ENCODE measurements at regions of chr16 and their contacts with region 1.

Region 1: GRCh38 chr16:10918294-10919002 is 23.8 kb downstream of the DEXI start:
- DNase-seq: peak; percentile 95
- H3K4me3 ChIP-seq: no peak overlapping the region
- H3K27ac ChIP-seq: no peak overlapping the region
- H3K4me1 ChIP-seq: no peaks in the 10 kb centered on the region
- H3K27me3 ChIP-seq: no peaks in the 10 kb centered on the region
- CTCF ChIP-seq: peak; percentile 93

Region 2: GRCh38 chr16:9772526-9773225 is 1145.8 kb before region 1 on chr16:
- intact Hi-C with region 1: no loop called
- DNase-seq: no peak
- H3K4me3 ChIP-seq: no peak overlapping the region
- H3K27ac ChIP-seq: no peak overlapping the region
- H3K4me1 ChIP-seq: no peaks in the 10 kb centered on the region
- H3K27me3 ChIP-seq: no peaks in the 10 kb centered on the region
- CTCF ChIP-seq: no peak

Region 3: GRCh38 chr16:10668322-10669045 is 250.0 kb before region 1 on chr16:
- intact Hi-C with region 1: loop called (anchors 10 kb)
- DNase-seq: no peak
- H3K4me3 ChIP-seq: no peak overlapping the region
- H3K27ac ChIP-seq: no peak overlapping the region
- H3K4me1 ChIP-seq: no peaks in the 10 kb centered on the region
- H3K27me3 ChIP-seq: no peaks in the 10 kb centered on the region
- CTCF ChIP-seq: peak; percentile 32

Region 4: DNA sequence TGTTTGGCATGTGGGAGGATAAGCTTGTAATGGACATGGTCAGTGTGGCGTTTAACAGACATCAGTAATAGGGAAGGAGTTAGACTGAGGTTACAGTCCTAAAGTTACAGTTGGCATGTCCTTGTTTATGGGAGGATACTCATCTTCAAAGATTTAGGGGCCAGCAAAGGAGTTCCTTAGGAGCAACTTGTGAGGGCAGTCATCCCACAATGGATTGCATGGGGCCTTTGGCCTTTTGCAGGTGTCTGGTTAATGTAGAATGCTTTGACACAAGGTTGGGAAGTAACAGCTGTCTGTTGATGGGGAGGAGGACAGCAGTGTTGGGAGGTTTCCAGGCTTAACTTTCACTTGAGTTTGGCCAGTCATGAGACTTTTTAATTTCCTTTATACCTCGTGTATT is 172.6 kb before region 1 on chr16:
- intact Hi-C with region 1: loop called (anchors 5 kb)
- DNase-seq: no peak
- H3K4me3 ChIP-seq: no peak overlapping the region
- H3K27ac ChIP-seq: no peak overlapping the region
- H3K4me1 ChIP-seq: peaks cover 4% of the 10 kb centered on the region
- H3K27me3 ChIP-seq: no peaks in the 10 kb centered on the region
- CTCF ChIP-seq: no peak

Region 5: GRCh38 chr16:11190588-11191560 is 272.4 kb after region 1 on chr16:
- intact Hi-C with region 1: no loop called
- DNase-seq: no peak
- H3K4me3 ChIP-seq: no peak overlapping the region
- H3K27ac ChIP-seq: no peak overlapping the region
- H3K4me1 ChIP-seq: no peaks in the 10 kb centered on the region
- H3K27me3 ChIP-seq: no peaks in the 10 kb centered on the region
- CTCF ChIP-seq: no peak